Panc1 (cell line): ENCODE measurements at regions of chr20 and their contacts with region 1.

Region 1: DNA sequence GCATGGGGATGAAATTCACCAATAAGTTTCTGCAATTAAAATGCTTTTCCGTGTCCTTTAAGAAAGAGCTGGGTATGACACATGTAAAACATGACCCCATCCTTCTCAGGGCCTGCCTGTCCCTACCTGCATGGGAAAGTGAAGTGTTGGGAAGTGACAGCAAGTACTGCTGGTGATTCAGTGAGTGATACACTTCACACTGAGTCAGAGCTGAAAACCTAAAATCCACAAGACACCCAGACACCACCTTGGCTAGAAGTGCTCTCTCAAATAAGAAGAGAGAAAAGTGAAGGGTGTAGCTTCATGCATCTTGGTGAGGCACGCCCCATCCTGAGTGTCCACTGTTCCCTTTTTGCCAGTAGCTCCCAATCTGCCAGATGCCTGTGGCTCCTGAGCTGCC is 3.3 kb downstream of the RAB22A start:
- DNase-seq: no peak
- ATAC-seq: no peak
- H3K4me3 ChIP-seq: no peak overlapping the region
- H3K27ac ChIP-seq: no peak overlapping the region
- H3K4me1 ChIP-seq: peaks cover 12% of the 10 kb centered on the region; the same call in 1 of the 2 replicates
- H3K27me3 ChIP-seq: no peaks in the 10 kb centered on the region
- CTCF ChIP-seq: no peak

Region 2: DNA sequence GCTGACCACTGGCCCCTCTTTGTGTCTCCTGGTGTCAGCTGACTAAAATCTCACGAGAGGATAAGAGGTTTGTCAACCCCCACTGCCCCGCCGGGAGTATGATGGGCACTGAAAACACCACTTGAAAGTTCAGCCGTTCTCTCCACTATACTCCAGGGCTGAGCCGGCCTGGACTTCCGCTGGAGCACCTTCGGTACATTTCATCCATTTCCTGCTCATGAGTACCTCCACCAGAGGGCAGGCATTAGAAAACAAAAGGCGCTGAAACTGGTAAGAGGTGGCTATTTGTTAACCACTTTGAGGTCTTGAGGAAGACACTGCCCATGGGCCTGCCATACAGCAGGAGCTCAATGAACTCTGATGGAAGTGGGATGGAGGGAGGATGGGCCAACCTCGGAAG is 66.5 kb before region 1 on chr20:
- CTCF ChIA-PET with region 1: no interaction called
- POLR2A ChIA-PET with region 1: no interaction called
- in situ Hi-C with region 1: no loop called
- intact Hi-C with region 1: no loop called
- DNase-seq: no peak
- ATAC-seq: peak; percentile 56; the same call in 1 of the 2 replicates
- H3K4me3 ChIP-seq: no peak overlapping the region
- H3K27ac ChIP-seq: no peak overlapping the region
- H3K4me1 ChIP-seq: no peaks in the 10 kb centered on the region
- H3K27me3 ChIP-seq: no peaks in the 10 kb centered on the region
- CTCF ChIP-seq: peak; percentile 53

Region 3: DNA sequence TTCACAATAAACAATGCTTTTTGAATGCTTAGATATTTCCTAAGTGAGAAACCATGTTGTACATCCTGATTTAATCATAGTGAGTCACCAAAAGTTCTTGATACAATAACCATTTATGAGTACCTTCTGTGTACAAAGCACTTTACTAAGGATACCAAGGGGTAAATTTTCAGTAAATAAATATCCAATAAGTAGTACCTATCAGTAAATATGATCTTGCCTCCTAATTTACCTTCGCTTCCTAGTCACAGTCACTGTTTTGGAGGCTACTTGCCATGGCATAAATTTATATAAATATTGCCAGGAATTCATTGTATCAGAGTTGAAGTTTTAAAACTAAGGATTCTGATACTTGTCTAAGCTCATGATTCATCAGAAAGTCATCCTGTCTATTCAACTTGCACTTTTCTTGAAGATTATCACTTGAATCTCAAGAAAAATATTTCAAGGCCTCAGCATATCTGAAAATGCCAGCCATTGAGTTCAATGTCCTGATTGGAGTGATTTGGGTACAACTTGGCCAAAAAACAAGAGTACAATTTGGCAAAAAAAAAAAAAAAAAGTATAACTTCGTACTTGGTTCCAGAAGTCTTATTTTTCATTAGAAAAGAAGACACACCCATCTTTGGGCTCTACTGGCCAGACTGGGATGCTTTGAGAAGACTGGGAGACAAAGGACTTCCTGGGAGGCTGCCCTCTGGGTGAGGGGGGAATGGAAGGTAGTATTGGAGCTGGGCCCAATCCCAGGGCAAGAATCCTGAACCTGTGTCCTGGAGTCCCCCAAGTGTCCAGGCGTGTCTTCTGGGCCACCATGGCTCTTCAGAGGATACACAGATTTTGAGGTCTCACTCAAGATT is 29.5 kb after region 1 on chr20:
- CTCF ChIA-PET with region 1: no interaction called
- POLR2A ChIA-PET with region 1: interaction called, 15 read pairs
- in situ Hi-C with region 1: no loop called
- intact Hi-C with region 1: no loop called
- DNase-seq: peak; percentile 13
- ATAC-seq: peak; percentile 82; the same call in 1 of the 2 replicates
- H3K4me3 ChIP-seq: no peak overlapping the region
- H3K27ac ChIP-seq: no peak overlapping the region
- H3K4me1 ChIP-seq: peaks cover 3% of the 10 kb centered on the region; the same call in 1 of the 2 replicates
- H3K27me3 ChIP-seq: no peaks in the 10 kb centered on the region
- CTCF ChIP-seq: no peak